Endothelial cell of umbilical vein (primary cell): ENCODE measurements at regions of chr3 and their contacts with region 1.

Region 1: GRCh38 chr3:107235928-107236315 is 141.3 kb upstream of the CCDC54 start:
- DNase-seq: peak; percentile 88
- H3K4me3 ChIP-seq: peak overlapping the region; percentile 28 to 86 (median 53)
- H3K27ac ChIP-seq: no peak overlapping the region
- H3K4me1 ChIP-seq: no peaks in the 10 kb centered on the region
- H3K27me3 ChIP-seq: no peaks in the 10 kb centered on the region
- CTCF ChIP-seq: peak; percentile 63 to 74
- POLR2A ChIP-seq: no peak

Region 2: GRCh38 chr3:107247110-107247509 is 11.2 kb after region 1 on chr3:
- CTCF ChIA-PET with region 1: interaction called, 20 read pairs
- POLR2A ChIA-PET with region 1: no interaction called
- dilution Hi-C with region 1: no loop called
- intact Hi-C with region 1: no loop called
- DNase-seq: no peak
- H3K4me3 ChIP-seq: no peak overlapping the region
- H3K27ac ChIP-seq: no peak overlapping the region
- H3K4me1 ChIP-seq: no peaks in the 10 kb centered on the region
- H3K27me3 ChIP-seq: no peaks in the 10 kb centered on the region
- CTCF ChIP-seq: no peak
- POLR2A ChIP-seq: no peak

Region 3: DNA sequence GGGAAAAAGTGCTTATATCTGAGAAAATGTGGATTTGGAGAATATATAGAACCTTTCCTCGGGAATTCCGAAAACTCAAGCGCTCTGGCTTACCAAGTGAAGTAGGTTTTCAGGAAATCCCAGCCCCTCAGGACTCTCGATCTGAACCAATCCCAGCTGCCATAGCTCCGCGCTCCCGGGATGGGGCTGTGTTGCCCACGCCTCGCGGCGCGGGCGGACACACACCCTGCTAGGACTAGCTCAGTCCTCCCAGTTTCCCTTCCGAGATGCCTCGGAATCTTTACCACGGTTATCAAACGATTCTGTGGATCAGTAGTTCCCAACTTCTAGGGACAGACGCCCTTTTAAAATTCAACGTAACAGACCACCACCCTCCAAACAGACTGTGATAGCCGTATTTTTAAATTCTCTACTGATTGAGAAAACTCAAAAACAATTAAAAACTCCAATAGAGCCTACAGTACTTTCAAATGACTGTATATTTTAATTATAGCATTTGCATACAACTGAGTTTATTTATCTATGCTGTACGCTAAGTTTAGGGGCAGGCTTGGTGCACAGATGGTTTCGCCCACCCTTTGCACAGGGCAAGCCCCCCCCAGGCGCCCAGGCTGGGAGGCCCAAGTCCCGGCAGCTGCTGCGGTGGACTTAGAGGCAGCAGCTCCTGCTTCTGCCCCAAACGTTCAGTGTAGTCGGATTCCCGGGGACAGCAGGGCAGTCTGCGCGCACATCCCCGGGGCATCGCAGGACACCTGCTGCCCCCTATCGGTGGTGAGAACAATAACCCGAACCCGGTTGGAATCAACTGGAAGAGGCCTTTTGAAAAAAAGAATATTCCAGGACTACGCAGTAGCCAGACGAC is 193.6 kb after region 1 on chr3:
- CTCF ChIA-PET with region 1: interaction called, 31 read pairs
- POLR2A ChIA-PET with region 1: no interaction called
- dilution Hi-C with region 1: no loop called
- intact Hi-C with region 1: loop called (anchors 1 kb)
- DNase-seq: peak; percentile 83
- H3K4me3 ChIP-seq: peak overlapping the region; percentile 21 to 75 (median 32)
- H3K27ac ChIP-seq: no peak overlapping the region
- H3K4me1 ChIP-seq: peaks cover 20% of the 10 kb centered on the region
- H3K27me3 ChIP-seq: peaks cover 0 to 3% of the 10 kb centered on the region in 2 experiments
- CTCF ChIP-seq: peak; percentile 90 to 92
- POLR2A ChIP-seq: no peak

Region 4: DNA sequence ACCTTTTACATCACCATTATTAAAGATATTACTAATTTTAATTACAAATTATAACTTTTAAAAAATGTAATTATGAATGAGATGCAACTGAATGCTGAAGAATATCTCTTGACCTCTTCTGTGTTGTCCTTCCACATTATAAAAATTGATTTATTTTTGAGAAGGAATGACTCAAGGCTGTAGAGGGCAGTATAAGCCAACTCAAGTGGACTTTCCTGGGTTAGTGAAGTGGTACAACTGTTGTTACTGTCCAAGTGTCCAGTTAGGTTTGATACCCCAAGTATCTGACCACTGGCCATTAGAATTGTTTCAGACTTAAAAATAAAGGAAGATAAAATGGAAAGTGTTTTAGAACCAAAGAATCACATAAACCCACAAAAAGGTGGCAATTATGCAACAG is 338.7 kb after region 1 on chr3:
- CTCF ChIA-PET with region 1: interaction called, 12 read pairs
- POLR2A ChIA-PET with region 1: no interaction called
- dilution Hi-C with region 1: no loop called
- intact Hi-C with region 1: no loop called
- DNase-seq: peak; percentile 66
- H3K4me3 ChIP-seq: no peak overlapping the region
- H3K27ac ChIP-seq: no peak overlapping the region
- H3K4me1 ChIP-seq: no peaks in the 10 kb centered on the region
- H3K27me3 ChIP-seq: no peaks in the 10 kb centered on the region
- CTCF ChIP-seq: peak; percentile 33 to 46
- POLR2A ChIP-seq: no peak

Region 5: GRCh38 chr3:107846279-107846852 is 610.4 kb after region 1 on chr3:
- CTCF ChIA-PET with region 1: interaction called, 27 read pairs
- POLR2A ChIA-PET with region 1: no interaction called
- dilution Hi-C with region 1: no loop called
- intact Hi-C with region 1: loop called (anchors 1 kb)
- DNase-seq: peak; percentile 64
- H3K4me3 ChIP-seq: no peak overlapping the region
- H3K27ac ChIP-seq: no peak overlapping the region
- H3K4me1 ChIP-seq: no peaks in the 10 kb centered on the region
- H3K27me3 ChIP-seq: peaks cover 4% of the 10 kb centered on the region in 2 experiments
- CTCF ChIP-seq: peak; percentile 54 to 79
- POLR2A ChIP-seq: no peak

Region 6: GRCh38 chr3:108477511-108478147 is 1241.7 kb after region 1 on chr3:
- CTCF ChIA-PET with region 1: interaction called, 25 read pairs
- POLR2A ChIA-PET with region 1: no interaction called
- dilution Hi-C with region 1: no loop called
- intact Hi-C with region 1: loop called (anchors 5 kb)
- DNase-seq: peak; percentile 77
- H3K4me3 ChIP-seq: no peak overlapping the region
- H3K27ac ChIP-seq: no peak overlapping the region
- H3K4me1 ChIP-seq: peaks cover 2% of the 10 kb centered on the region
- H3K27me3 ChIP-seq: no peaks in the 10 kb centered on the region
- CTCF ChIP-seq: peak; percentile 55 to 57
- POLR2A ChIP-seq: no peak